Left colon (tissue), 2 donors: ENCODE measurements at regions of chr20 and their contacts with region 1.

Region 1: GRCh38 chr20:5181956-5182355 is 55.1 kb downstream of the CDS2 start:
- DNase-seq: no peak
- ATAC-seq: peak; percentile 23

Region 2: DNA sequence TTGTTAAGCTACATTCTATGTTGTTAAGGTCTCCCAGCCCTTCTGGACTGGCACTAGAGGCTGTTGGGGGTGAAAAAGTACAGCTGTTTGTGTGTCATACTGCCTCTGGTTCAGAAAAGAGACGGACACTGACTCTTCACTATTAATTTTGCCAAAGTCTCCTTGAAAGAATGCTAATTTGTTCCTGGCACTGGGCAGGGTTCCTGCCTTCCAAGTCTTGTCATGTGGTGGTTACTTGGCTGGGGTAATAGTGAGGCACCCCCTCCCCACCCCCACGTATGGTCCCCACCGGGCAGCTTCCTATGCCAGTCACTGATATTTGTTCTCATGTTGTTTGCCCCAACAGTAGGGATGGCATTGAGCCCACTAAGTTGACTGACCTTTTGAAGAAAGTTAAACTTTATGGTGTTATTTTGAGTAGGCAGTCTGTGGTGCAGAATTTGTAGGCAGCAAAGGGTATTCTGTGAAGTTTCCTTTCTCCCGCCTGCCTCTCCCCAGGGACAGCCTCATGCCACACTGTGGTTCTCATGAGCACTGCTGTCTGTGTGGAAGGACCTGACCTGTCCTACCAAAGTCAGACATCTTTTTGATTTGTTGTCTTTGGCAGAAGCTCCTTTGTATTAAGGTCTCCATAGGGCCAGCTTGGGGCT is 46.5 kb before region 1 on chr20:
- intact Hi-C with region 1: loop called in 1 of 2 experiments (anchors 10 kb)
- DNase-seq: no peak
- ATAC-seq: no peak

Region 3: GRCh38 chr20:5474646-5475550 is 292.9 kb after region 1 on chr20:
- intact Hi-C with region 1: no loop called
- DNase-seq: no peak
- ATAC-seq: no peak